ENCODE measurements at regions of chr1 and their contacts with region 1.

Region 1: GRCh38 chr1:198756470-198756869 is 117.6 kb downstream of the PTPRC start:
- DNase-seq: no peak
- H3K4me3 Mint-ChIP-seq: no peak overlapping the region
- H3K27ac Mint-ChIP-seq: no peak overlapping the region
- H3K4me1 Mint-ChIP-seq: no peaks in the 10 kb centered on the region
- H3K27me3 Mint-ChIP-seq: no peaks in the 10 kb centered on the region
- CTCF ChIP-seq: no peak

Region 2: GRCh38 chr1:199551967-199552565 is 795.6 kb after region 1 on chr1:
- CTCF ChIA-PET with region 1: no interaction called
- intact Hi-C with region 1: loop called (anchors 5 kb)
- DNase-seq: peak; percentile 72
- H3K4me3 Mint-ChIP-seq: no peak overlapping the region
- H3K27ac Mint-ChIP-seq: no peak overlapping the region
- H3K4me1 Mint-ChIP-seq: no peaks in the 10 kb centered on the region
- H3K27me3 Mint-ChIP-seq: no peaks in the 10 kb centered on the region
- CTCF ChIP-seq: peak; percentile 68